ENCODE measurements at regions of chrX and their contacts with region 1.

Region 1: DNA sequence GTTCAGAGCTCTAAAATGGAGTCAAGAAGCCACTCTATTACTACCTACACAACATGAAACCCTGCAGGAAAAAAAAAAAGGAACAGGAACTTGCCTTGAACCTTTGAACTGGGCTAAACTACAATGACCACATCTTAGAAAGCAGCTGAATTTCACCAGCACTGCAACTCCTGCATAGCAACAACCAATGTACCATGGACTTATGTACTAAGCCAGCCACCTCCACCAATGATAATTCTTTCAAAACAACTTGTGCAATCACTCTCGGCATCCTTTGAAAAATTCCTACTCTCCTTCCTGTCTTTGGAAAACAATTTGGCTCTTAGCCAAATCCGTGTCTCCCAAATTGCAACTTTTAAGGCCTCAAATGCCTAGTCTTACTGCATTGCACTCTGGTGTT is 26.8 kb upstream of the FMR1 start:
- DNase-seq: no peak
- ATAC-seq: no peak
- H3K4me3 ChIP-seq: no peak overlapping the region
- H3K27ac ChIP-seq: no peak overlapping the region
- H3K4me1 ChIP-seq: no peaks in the 10 kb centered on the region
- H3K27me3 ChIP-seq: no peaks in the 10 kb centered on the region
- CTCF ChIP-seq: no peak
- POLR2A ChIP-seq: no peak
- RAD21 ChIP-seq: no peak

Region 2: DNA sequence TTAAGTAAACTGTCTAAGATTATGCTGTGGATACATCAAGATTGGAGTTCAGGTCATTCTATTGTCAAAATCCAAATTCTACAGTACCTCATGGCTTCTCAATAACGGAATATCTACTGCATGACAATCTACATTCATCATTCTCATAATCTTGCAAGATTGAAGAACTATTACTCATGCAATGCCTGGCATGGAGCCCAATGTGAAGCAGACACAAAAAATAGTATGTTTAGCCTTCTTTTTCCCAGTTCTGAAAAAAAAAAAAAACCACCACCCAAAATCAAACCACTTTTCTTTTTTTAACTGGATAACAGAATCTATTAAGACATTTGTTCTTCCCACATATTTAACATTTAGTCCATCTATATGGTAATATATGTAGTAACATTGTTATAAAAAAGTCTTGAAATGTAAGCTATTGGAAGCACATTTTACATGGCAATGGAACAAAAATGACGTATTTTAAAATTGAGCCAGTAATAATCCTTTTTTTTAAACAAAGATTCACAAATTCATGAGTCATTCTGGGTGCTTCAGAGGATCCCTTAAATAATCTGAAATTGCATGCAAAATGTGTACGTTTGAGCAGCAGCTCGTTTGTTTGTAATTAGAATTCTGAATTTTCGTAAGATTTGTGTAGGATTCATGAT is 205.5 kb before region 1 on chrX:
- CTCF ChIA-PET with region 1: no interaction called
- POLR2A ChIA-PET with region 1: no interaction called
- dilution Hi-C with region 1: no loop called
- in situ Hi-C with region 1: no loop called
- intact Hi-C with region 1: loop called (anchors 10 kb)
- DNase-seq: no peak
- ATAC-seq: no peak
- H3K4me3 ChIP-seq: no peak overlapping the region
- H3K27ac ChIP-seq: no peak overlapping the region
- H3K4me1 ChIP-seq: no peaks in the 10 kb centered on the region
- H3K27me3 ChIP-seq: no peaks in the 10 kb centered on the region
- CTCF ChIP-seq: no peak
- POLR2A ChIP-seq: no peak
- RAD21 ChIP-seq: no peak

Region 3: GRCh38 chrX:147850875-147851274 is 34.1 kb before region 1 on chrX:
- CTCF ChIA-PET with region 1: no interaction called
- POLR2A ChIA-PET with region 1: no interaction called
- dilution Hi-C with region 1: no loop called
- in situ Hi-C with region 1: no loop called
- intact Hi-C with region 1: no loop called
- DNase-seq: no peak
- ATAC-seq: no peak
- H3K4me3 ChIP-seq: no peak overlapping the region
- H3K27ac ChIP-seq: no peak overlapping the region
- H3K4me1 ChIP-seq: no peaks in the 10 kb centered on the region
- H3K27me3 ChIP-seq: no peaks in the 10 kb centered on the region
- CTCF ChIP-seq: no peak
- POLR2A ChIP-seq: no peak
- RAD21 ChIP-seq: no peak

Measured in IMR-90 (cell line).